SK-MEL-5 (cell line): ENCODE measurements at regions of chr2 and their contacts with region 1.

Region 1: GRCh38 chr2:171420728-171421563 is 12.8 kb downstream of the METTL8 start:
- DNase-seq: no peak

Region 2: DNA sequence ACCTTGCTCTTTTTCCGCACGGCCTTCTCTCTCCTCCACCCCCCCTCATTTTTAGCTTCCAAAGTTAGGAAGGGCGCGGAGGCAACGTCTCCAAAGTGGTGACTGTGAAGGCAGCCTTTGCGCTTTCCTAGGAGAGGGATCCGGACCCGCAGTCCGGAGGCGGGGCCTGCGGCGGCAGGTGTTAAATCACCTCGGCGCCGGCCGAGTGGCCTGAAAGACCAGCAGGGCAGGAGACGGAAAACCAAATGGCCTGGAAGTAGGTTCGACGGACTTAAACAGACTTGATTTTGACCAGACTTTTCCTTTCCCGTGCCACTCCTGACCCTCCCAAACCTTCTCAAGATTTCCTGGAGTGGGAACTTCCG is 491.3 kb before region 1 on chr2:
- in situ Hi-C with region 1: loop called (anchors 10 kb)
- DNase-seq: peak; percentile 17

Region 3: GRCh38 chr2:171652416-171652785 is 231.5 kb after region 1 on chr2:
- in situ Hi-C with region 1: no loop called
- DNase-seq: no peak